B cell (primary cell): ENCODE measurements at regions of chr4 and their contacts with region 1.

Region 1: DNA sequence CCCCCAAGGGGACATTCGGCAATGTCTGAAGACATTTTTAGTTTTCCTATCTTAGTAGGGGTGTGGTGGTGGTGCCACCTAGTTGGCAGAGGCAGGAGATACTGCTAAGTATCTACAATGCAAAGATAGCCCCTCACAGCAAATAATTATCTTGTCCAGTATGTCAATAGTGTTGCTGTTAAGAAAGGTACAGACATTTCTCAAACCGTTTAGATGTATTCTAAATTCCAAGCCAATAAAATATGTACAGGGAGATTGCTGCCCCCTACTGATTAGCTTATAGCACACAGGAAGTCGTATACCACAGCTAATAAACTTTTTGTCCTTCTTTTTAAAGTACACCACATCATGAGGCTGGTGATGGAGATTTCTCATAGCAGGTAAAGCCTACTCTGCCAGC is 260.5 kb downstream of the TMA16 start:
- DNase-seq: peak; percentile 56
- ATAC-seq: peak; percentile 54
- H3K4me3 ChIP-seq: peak overlapping the region in 1 of 5 experiments; percentile 8
- H3K4me3 Mint-ChIP-seq: peak overlapping the region; percentile 64
- H3K27ac ChIP-seq: no peak overlapping the region
- H3K27ac Mint-ChIP-seq: no peak overlapping the region
- H3K4me1 ChIP-seq: peaks cover 5 to 6% of the 10 kb centered on the region in 2 donors
- H3K4me1 Mint-ChIP-seq: peaks cover 5% of the 10 kb centered on the region
- H3K27me3 ChIP-seq: no peaks in the 10 kb centered on the region
- H3K27me3 Mint-ChIP-seq: no peaks in the 10 kb centered on the region
- CTCF ChIP-seq: peak; percentile 74

Region 2: GRCh38 chr4:162497564-162498167 is 1257.3 kb before region 1 on chr4:
- CTCF ChIA-PET with region 1: interaction called, 3 read pairs
- POLR2A ChIA-PET with region 1: no interaction called
- intact Hi-C with region 1: loop called (anchors 5 kb)
- DNase-seq: peak; percentile 39
- ATAC-seq: no peak
- H3K4me3 ChIP-seq: no peak overlapping the region
- H3K4me3 Mint-ChIP-seq: no peak overlapping the region
- H3K27ac ChIP-seq: no peak overlapping the region
- H3K27ac Mint-ChIP-seq: no peak overlapping the region
- H3K4me1 ChIP-seq: no peaks in the 10 kb centered on the region
- H3K4me1 Mint-ChIP-seq: no peaks in the 10 kb centered on the region
- H3K27me3 ChIP-seq: no peaks in the 10 kb centered on the region
- H3K27me3 Mint-ChIP-seq: no peaks in the 10 kb centered on the region
- CTCF ChIP-seq: peak; percentile 93

Region 3: DNA sequence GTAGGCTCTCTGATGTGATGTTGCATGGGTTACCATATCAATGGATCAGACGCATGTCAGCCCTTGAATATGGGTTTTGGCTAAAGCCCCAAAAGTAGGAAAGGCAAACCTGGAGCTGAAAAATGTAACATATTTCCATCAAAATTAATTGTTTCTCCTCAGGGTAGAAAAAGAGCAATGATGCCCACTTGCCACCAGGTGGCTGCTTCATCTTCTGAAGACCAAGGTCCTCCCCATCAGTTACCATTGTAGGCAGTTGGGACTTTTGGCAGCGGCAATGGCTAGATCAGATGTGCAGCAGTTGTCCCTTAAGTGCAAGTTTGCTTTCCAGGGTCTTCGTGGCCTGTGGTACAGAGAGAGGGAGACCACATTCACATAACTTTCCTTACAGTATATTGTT is 706.6 kb before region 1 on chr4:
- CTCF ChIA-PET with region 1: interaction called, 4 read pairs
- POLR2A ChIA-PET with region 1: no interaction called
- intact Hi-C with region 1: loop called (anchors 2 kb)
- DNase-seq: peak; percentile 27
- ATAC-seq: peak; percentile 17
- H3K4me3 ChIP-seq: no peak overlapping the region
- H3K4me3 Mint-ChIP-seq: no peak overlapping the region
- H3K27ac ChIP-seq: no peak overlapping the region
- H3K27ac Mint-ChIP-seq: no peak overlapping the region
- H3K4me1 ChIP-seq: no peaks in the 10 kb centered on the region
- H3K4me1 Mint-ChIP-seq: no peaks in the 10 kb centered on the region
- H3K27me3 ChIP-seq: no peaks in the 10 kb centered on the region
- H3K27me3 Mint-ChIP-seq: peaks cover 13% of the 10 kb centered on the region
- CTCF ChIP-seq: peak; percentile 66

Region 4: GRCh38 chr4:163484906-163485305 is 270.1 kb before region 1 on chr4:
- CTCF ChIA-PET with region 1: interaction called, 39 read pairs
- POLR2A ChIA-PET with region 1: no interaction called
- intact Hi-C with region 1: loop called (anchors 1 kb)
- DNase-seq: peak; percentile 80
- ATAC-seq: peak; percentile 82
- H3K4me3 ChIP-seq: no peak overlapping the region
- H3K4me3 Mint-ChIP-seq: no peak overlapping the region
- H3K27ac ChIP-seq: no peak overlapping the region
- H3K27ac Mint-ChIP-seq: no peak overlapping the region
- H3K4me1 ChIP-seq: peaks cover 18 to 27% of the 10 kb centered on the region in 2 donors
- H3K4me1 Mint-ChIP-seq: peaks cover 7% of the 10 kb centered on the region
- H3K27me3 ChIP-seq: no peaks in the 10 kb centered on the region
- H3K27me3 Mint-ChIP-seq: no peaks in the 10 kb centered on the region
- CTCF ChIP-seq: peak; percentile 88

Region 5: DNA sequence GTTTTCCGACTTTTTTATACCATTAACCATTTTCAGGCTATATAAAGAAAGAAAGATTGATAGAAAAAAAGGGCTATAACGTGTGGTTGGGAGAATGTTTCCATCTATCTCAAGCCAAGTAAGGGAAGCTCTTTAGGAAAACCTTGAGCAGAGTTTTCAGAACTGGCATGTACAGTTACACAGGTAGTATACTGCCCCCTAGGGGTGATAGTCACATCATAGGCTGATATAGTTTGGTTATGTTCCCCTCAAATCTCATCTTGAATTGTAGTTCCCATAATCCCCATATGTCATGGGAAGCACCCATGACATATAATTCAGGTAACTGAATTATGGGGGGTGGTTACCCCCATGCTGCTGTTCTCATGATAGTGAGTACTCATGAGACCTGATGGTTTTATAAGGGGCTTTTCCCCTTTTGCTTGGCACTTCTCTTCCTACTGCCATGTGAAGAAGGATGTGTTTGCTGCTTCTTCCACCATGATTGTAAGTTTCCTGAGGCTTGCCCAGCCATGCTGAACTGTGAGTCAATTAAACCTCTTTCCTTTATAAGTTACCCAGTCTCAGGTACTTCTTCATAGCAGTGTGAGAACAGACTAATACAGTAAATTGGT is 73.7 kb before region 1 on chr4:
- CTCF ChIA-PET with region 1: interaction called, 14 read pairs
- POLR2A ChIA-PET with region 1: no interaction called
- intact Hi-C with region 1: loop called (anchors 1 kb)
- DNase-seq: peak; percentile 80
- ATAC-seq: peak; percentile 85
- H3K4me3 ChIP-seq: no peak overlapping the region
- H3K4me3 Mint-ChIP-seq: no peak overlapping the region
- H3K27ac ChIP-seq: no peak overlapping the region
- H3K27ac Mint-ChIP-seq: peak overlapping the region; percentile 74
- H3K4me1 ChIP-seq: peaks cover 6 to 11% of the 10 kb centered on the region in 2 donors
- H3K4me1 Mint-ChIP-seq: peaks cover 24% of the 10 kb centered on the region
- H3K27me3 ChIP-seq: no peaks in the 10 kb centered on the region
- H3K27me3 Mint-ChIP-seq: no peaks in the 10 kb centered on the region
- CTCF ChIP-seq: peak; percentile 87

Region 6: GRCh38 chr4:164134388-164134787 is 379.4 kb after region 1 on chr4:
- CTCF ChIA-PET with region 1: no interaction called
- POLR2A ChIA-PET with region 1: no interaction called
- intact Hi-C with region 1: no loop called
- DNase-seq: no peak
- ATAC-seq: no peak
- H3K4me3 ChIP-seq: no peak overlapping the region
- H3K4me3 Mint-ChIP-seq: no peak overlapping the region
- H3K27ac ChIP-seq: no peak overlapping the region
- H3K27ac Mint-ChIP-seq: no peak overlapping the region
- H3K4me1 ChIP-seq: no peaks in the 10 kb centered on the region
- H3K4me1 Mint-ChIP-seq: no peaks in the 10 kb centered on the region
- H3K27me3 ChIP-seq: no peaks in the 10 kb centered on the region
- H3K27me3 Mint-ChIP-seq: no peaks in the 10 kb centered on the region
- CTCF ChIP-seq: no peak